ENCODE measurements at regions of chr16 and their contacts with region 1.

Region 1: DNA sequence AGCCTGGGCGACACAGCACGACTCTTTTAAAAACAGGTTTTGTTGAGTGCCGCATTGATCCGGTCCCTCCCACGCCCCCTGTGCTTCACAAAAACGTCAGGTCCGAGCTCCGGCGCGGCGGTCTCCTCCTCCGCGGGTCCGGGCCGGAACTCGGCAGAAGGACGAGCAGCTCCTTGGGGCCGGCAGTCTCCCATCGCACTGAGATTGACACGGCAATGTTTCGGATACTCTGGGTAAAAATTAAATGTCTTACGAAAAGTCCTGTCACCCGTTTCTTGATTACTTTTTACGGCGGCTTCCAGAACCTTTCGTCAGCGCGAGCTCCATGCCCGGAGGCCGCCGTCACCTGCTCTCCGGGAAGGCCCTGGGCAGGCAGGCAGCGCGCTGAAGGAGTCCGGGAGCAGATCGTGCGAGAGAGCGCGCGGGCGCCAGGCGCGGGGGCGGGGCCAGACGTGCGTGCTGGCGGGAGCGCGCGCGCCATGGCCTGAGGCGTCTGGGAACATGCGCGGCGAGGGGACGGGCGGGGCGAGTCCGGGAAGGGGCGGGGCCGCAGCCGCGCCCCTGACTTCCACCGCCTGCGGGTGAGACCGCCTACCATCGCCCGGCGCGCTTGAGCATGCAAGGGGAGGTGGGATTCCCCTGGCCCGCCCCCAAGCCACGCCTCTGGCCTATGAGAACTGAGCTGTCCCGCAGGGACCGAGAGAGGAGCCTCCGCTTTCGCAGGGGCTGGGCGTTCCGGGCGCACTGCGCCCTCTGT is 11.7 kb upstream of the SRL start:
- DNase-seq: peak; percentile 100
- ATAC-seq: peak; percentile 99
- H3K4me3 Mint-ChIP-seq: peak overlapping the region; percentile 90
- H3K27ac Mint-ChIP-seq: peak overlapping the region; percentile 98
- H3K4me1 Mint-ChIP-seq: peaks cover 5% of the 10 kb centered on the region
- H3K27me3 Mint-ChIP-seq: no peaks in the 10 kb centered on the region

Region 2: GRCh38 chr16:3938848-3939624 is 314.5 kb before region 1 on chr16:
- CTCF ChIA-PET with region 1: interaction called, 31 read pairs
- DNase-seq: peak; percentile 59
- ATAC-seq: peak; percentile 88
- H3K4me3 Mint-ChIP-seq: no peak overlapping the region
- H3K27ac Mint-ChIP-seq: no peak overlapping the region
- H3K4me1 Mint-ChIP-seq: peaks cover 3% of the 10 kb centered on the region
- H3K27me3 Mint-ChIP-seq: no peaks in the 10 kb centered on the region

Region 3: DNA sequence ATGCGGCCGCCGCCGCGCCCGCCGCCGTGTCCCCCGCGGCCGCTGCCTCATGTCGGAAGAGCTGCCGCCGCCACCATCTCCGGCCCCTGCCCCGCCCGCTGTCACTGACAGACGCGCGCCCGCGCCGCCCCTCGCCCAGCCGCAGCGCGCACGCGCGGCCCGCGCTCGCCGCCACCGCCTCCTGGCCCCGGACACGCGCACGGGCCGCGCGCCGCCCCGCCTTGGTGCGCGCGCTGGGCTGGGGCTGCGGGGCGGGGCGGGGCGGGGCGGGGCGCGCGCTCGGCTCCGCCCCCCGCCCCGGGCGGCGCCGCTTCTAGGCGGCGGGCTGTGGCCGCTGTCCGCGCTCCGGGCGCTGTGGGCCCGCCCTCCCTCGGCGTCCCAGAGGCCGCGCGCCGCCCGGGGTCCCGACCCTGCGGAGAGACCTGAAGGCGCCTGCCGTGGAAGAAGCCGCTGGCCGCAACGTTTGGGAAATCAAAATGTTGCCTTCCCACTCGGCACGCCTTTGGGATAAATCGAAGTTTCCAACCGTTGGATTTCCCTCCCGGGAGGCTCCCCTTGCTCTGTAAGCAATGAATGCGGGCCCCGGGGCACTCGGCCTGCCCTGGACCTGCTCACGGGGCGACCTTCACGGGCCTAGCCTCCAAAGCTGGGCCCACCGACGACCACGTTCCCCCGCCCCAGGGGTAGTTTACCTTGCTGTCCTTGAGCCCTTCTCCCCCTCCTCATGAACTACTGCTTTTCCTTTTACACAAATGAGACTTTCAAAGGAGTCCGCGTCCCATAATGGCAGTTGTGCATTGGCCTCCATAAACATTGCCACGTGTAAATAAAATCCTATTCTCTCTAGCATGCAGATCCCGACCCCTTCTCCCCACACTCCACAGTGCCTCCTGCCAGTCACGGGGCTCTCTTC is 137.0 kb before region 1 on chr16 and contains the start of gene ADCY9:
- CTCF ChIA-PET with region 1: interaction called, 23 read pairs
- DNase-seq: peak; percentile 79
- ATAC-seq: peak; percentile 86
- H3K4me3 Mint-ChIP-seq: peak within 1 kb of the TSS; percentile 79
- H3K27ac Mint-ChIP-seq: peak within 1 kb of the TSS; percentile 77
- H3K4me1 Mint-ChIP-seq: peaks cover 38% of the 10 kb centered on the region
- H3K27me3 Mint-ChIP-seq: peaks cover 17% of the 10 kb centered on the region
- total RNA-seq, gene ADCY9: 8.6 to 11.0 TPM

Region 4: GRCh38 chr16:4131621-4132020 is 122.0 kb before region 1 on chr16:
- CTCF ChIA-PET with region 1: no interaction called
- DNase-seq: no peak
- ATAC-seq: no peak
- H3K4me3 Mint-ChIP-seq: no peak overlapping the region
- H3K27ac Mint-ChIP-seq: no peak overlapping the region
- H3K4me1 Mint-ChIP-seq: no peaks in the 10 kb centered on the region
- H3K27me3 Mint-ChIP-seq: peaks cover 16% of the 10 kb centered on the region

Region 5: GRCh38 chr16:4271176-4272066 is 17.8 kb after region 1 on chr16:
- CTCF ChIA-PET with region 1: interaction called, 218 read pairs
- DNase-seq: peak; percentile 95
- ATAC-seq: peak; percentile 86
- H3K4me3 Mint-ChIP-seq: peak overlapping the region; percentile 85
- H3K27ac Mint-ChIP-seq: peak overlapping the region; percentile 93
- H3K4me1 Mint-ChIP-seq: peaks cover 21% of the 10 kb centered on the region
- H3K27me3 Mint-ChIP-seq: no peaks in the 10 kb centered on the region

Region 6: DNA sequence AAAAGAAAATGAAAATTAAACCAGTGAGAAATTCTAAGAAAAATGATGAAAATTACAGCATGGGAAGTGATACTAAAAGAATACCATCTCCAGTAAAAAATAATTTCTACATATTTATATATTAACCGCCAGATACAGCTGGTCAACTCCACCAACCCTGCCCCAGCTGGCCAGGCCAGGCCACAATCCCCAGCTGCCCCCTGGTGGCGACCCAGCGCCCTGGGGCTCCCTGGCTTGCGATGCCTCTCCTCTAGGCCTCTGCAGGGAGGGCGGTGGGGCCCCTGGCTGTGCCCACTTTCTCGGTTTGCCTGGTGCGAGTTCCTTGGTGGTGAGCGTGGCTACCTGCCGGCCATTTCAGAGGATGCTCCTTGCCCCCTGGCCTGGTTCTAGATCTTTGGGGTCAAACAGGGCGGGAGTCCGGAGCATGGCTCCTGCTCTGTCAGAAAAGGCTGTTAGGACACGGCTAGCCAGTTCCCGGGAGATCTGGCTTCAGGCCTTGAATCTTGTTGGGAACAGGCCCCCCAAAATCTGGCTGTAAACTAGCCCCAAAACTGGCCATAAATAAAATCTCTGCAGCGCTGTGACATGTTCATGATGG is 76.8 kb after region 1 on chr16:
- CTCF ChIA-PET with region 1: interaction called, 12 read pairs
- DNase-seq: peak; percentile 82
- ATAC-seq: peak; percentile 82
- H3K4me3 Mint-ChIP-seq: no peak overlapping the region
- H3K27ac Mint-ChIP-seq: no peak overlapping the region
- H3K4me1 Mint-ChIP-seq: peaks cover 3% of the 10 kb centered on the region
- H3K27me3 Mint-ChIP-seq: peaks cover 10% of the 10 kb centered on the region

Region 7: GRCh38 chr16:4544473-4544872 is 290.9 kb after region 1 on chr16:
- CTCF ChIA-PET with region 1: no interaction called
- DNase-seq: no peak
- ATAC-seq: no peak
- H3K4me3 Mint-ChIP-seq: no peak overlapping the region
- H3K27ac Mint-ChIP-seq: no peak overlapping the region
- H3K4me1 Mint-ChIP-seq: peaks cover 5% of the 10 kb centered on the region
- H3K27me3 Mint-ChIP-seq: peaks cover 3% of the 10 kb centered on the region

Measured in activated CD8-positive, alpha-beta memory T cell treated with anti-CD3 and anti-CD28 coated beads, Interleukin-2, amount 10 ng/mL, durations not matched to agents 7 days and 5 days (primary cell).